T-cell (primary cell): ENCODE measurements at regions of chr20 and their contacts with region 1.

Region 1: GRCh38 chr20:3068986-3069900 is 2.2 kb upstream of the OXT start:
- DNase-seq: peak in 25 of 35 experiments; percentile 26 to 64 (median 50)
- ATAC-seq: peak; percentile 28 to 66 (median 38)
- H3K4me3 ChIP-seq: no peak overlapping the region
- H3K4me3 Mint-ChIP-seq: no peak overlapping the region
- H3K27ac ChIP-seq: no peak overlapping the region
- H3K27ac Mint-ChIP-seq: no peak overlapping the region
- H3K4me1 ChIP-seq: peaks cover 2 to 17% of the 10 kb centered on the region in 2 experiments
- H3K4me1 Mint-ChIP-seq: peaks cover 14 to 25% (median 21%) of the 10 kb centered on the region in 3 donors
- H3K27me3 ChIP-seq: peaks cover 0 to 15% of the 10 kb centered on the region in 2 experiments
- H3K27me3 Mint-ChIP-seq: no peaks in the 10 kb centered on the region

Region 2: GRCh38 chr20:3045816-3046676 is 23.2 kb before region 1 on chr20 and contains the start of gene MRPS26:
- CTCF ChIA-PET with region 1: no interaction called
- POLR2A ChIA-PET with region 1: no interaction called
- DNase-seq: peak; percentile 31 to 83 (median 70)
- ATAC-seq: peak; percentile 91 to 95 (median 92)
- H3K4me3 ChIP-seq: peak within 1 kb of the TSS; percentile 68 to 69
- H3K4me3 Mint-ChIP-seq: peak within 1 kb of the TSS; percentile 79 to 82 (median 82)
- H3K27ac ChIP-seq: peak within 1 kb of the TSS; percentile 56
- H3K27ac Mint-ChIP-seq: peak within 1 kb of the TSS; percentile 79 to 86
- H3K4me1 ChIP-seq: peaks cover 4 to 22% of the 10 kb centered on the region in 2 experiments
- H3K4me1 Mint-ChIP-seq: peaks cover 16 to 23% (median 20%) of the 10 kb centered on the region in 3 donors
- H3K27me3 ChIP-seq: no peaks in the 10 kb centered on the region
- H3K27me3 Mint-ChIP-seq: no peaks in the 10 kb centered on the region
- total RNA-seq, gene MRPS26: 20.9 to 38.5 (median 36.8) TPM

Region 3: GRCh38 chr20:3171371-3172063 is 102.3 kb after region 1 on chr20:
- CTCF ChIA-PET with region 1: no interaction called
- POLR2A ChIA-PET with region 1: interaction called in 1 of 2 experiments, 11 read pairs
- DNase-seq: no peak
- ATAC-seq: no peak
- H3K4me3 ChIP-seq: no peak overlapping the region
- H3K4me3 Mint-ChIP-seq: peak overlapping the region; percentile 77 to 86 (median 80)
- H3K27ac ChIP-seq: no peak overlapping the region
- H3K27ac Mint-ChIP-seq: no peak overlapping the region
- H3K4me1 ChIP-seq: peaks cover 2 to 33% of the 10 kb centered on the region in 2 experiments
- H3K4me1 Mint-ChIP-seq: peaks cover 23 to 28% (median 27%) of the 10 kb centered on the region in 3 donors
- H3K27me3 ChIP-seq: peaks cover 5 to 58% of the 10 kb centered on the region in 2 experiments
- H3K27me3 Mint-ChIP-seq: peaks cover 6 to 38% of the 10 kb centered on the region in 2 donors

Region 4: DNA sequence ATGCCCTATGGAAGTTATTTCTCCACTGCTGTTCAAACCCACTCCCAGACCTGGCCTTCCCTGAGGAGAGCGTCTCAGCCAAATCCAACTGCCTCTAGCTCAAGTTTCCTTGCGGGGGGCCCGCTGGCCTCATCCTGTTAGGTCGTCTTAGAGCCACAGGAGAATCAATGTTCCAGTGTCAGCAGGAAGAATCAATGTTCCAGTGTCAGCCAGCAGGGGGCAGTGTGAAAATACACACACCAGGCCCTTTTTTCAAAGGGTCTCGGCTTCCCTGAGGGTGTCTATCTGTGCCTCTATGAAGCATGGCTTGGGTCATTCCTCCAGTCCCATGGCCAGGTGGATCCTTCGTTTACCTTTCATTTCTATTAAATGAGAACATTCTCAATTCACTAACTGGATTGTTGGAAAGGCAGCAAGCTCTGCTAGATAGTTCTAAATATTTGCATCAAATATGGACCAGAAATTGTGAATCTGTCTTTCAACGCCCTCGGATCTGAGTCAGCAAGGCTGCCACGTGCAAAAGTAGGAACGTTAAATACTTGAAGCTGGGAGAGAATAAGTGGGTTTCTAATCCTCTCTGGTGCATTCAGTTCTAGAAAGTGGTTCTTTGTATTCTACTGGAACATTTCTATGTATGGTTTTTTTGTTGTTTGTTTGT is 1671.7 kb after region 1 on chr20:
- CTCF ChIA-PET with region 1: no interaction called
- POLR2A ChIA-PET with region 1: no interaction called
- DNase-seq: peak in 33 of 35 experiments; percentile 19 to 78 (median 59)
- ATAC-seq: peak; percentile 27 to 52 (median 46)
- H3K4me3 ChIP-seq: no peak overlapping the region
- H3K4me3 Mint-ChIP-seq: no peak overlapping the region
- H3K27ac ChIP-seq: no peak overlapping the region
- H3K27ac Mint-ChIP-seq: no peak overlapping the region
- H3K4me1 ChIP-seq: peaks cover 0 to 4% of the 10 kb centered on the region in 2 experiments
- H3K4me1 Mint-ChIP-seq: peaks cover 0 to 6% (median 2%) of the 10 kb centered on the region in 3 donors
- H3K27me3 ChIP-seq: peaks cover 0 to 11% of the 10 kb centered on the region in 2 experiments
- H3K27me3 Mint-ChIP-seq: peaks cover 9 to 25% of the 10 kb centered on the region in 2 donors